ENCODE measurements at regions of chr1 and their contacts with region 1.

Region 1: DNA sequence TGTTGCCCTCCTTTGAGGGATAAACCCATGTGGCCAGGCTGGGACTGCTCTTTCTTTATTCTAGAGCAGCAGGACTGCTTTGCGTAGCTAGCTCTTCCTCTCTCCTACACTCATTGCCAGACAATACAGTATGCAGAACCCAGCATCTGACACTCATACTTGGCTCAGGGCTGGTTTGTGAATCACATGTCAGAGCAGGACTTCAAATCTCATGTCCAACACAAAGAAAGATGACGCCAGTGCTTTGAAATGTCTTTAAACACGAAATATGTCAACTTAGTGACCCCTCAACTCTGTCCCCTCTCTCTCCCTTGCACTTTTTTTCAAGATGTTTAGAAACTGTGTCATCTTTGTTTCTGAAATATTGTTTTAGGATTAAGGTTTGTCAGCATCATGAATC is 135.0 kb downstream of the TGFB2 start:
- DNase-seq: no peak
- H3K4me3 ChIP-seq: no peak overlapping the region
- H3K27ac ChIP-seq: peak overlapping the region; percentile 77
- H3K4me1 ChIP-seq: peaks cover 41% of the 10 kb centered on the region
- H3K27me3 ChIP-seq: no peaks in the 10 kb centered on the region
- CTCF ChIP-seq: no peak

Region 2: GRCh38 chr1:218377143-218377660 is 102.9 kb before region 1 on chr1:
- CTCF ChIA-PET with region 1: no interaction called
- POLR2A ChIA-PET with region 1: interaction called, 9 read pairs
- intact Hi-C with region 1: loop called (anchors 1 kb)
- DNase-seq: peak; percentile 87 to 96
- H3K4me3 ChIP-seq: peak overlapping the region; percentile 36
- H3K27ac ChIP-seq: peak overlapping the region; percentile 91
- H3K4me1 ChIP-seq: peaks cover 80% of the 10 kb centered on the region
- H3K27me3 ChIP-seq: no peaks in the 10 kb centered on the region
- CTCF ChIP-seq: no peak

Region 3: DNA sequence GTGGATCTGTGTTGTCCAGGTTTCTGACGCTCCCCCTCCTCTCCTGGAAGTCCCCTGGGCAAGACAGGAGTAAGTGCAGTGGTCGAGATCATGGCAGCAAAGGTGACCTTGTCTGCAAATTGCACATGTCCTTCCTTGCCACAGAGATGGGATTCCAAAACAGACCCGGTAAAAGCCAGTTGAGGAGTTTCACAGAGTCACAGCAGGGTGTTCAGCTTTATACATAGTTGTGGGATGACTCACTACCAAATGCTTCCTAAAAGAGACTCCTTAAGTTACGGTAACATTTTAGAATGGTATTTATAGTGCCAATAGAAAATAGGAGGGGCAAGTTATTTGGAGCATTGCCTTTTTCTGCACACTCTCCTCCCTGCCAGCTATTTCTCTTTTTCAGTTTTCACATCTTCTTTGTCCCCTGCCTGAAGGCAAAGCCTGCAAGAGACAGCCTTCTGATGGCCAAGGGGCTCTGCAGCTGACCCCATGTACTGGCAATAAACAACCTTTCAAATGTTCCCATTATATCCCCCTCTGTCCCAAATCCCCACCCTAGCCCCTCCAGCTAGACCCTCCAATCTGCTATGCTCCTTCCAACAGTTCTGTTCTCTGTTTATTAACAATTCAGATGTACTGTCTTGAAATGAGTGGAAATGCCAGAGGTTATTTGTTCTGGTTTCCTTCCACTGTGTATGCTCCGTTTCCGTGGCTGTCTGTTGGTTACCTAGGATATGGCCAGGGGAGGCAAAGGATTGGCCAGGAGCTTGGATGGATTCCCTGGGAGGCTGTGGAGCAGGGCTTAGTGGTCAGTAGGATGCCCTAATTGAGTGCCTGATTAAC is 20.0 kb before region 1 on chr1:
- CTCF ChIA-PET with region 1: no interaction called
- POLR2A ChIA-PET with region 1: interaction called, 3 read pairs
- intact Hi-C with region 1: loop called (anchors 1 kb)
- DNase-seq: peak; percentile 68 to 93
- H3K4me3 ChIP-seq: no peak overlapping the region
- H3K27ac ChIP-seq: peak overlapping the region; percentile 63
- H3K4me1 ChIP-seq: peaks cover 14% of the 10 kb centered on the region
- H3K27me3 ChIP-seq: no peaks in the 10 kb centered on the region
- CTCF ChIP-seq: no peak

Region 4: DNA sequence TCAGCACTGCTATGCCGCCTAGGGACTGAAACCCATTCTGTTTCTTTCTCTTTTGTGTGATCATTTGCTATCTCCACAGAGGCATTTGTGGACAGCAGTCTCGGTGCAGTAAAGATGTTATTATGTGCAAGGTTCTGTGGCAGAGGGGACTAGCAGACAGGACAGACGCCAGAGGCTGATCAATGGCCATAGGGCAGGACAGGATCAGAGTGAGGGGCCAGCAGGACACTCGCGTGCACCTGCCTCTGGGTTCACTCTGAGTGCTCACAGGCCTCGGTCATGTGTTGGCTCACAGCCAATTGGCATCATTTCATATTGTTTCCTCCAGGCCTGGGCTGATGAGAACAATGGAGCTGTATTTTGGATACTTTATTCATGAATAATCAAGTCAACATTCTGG is 77.6 kb after region 1 on chr1:
- CTCF ChIA-PET with region 1: no interaction called
- POLR2A ChIA-PET with region 1: no interaction called
- intact Hi-C with region 1: no loop called
- DNase-seq: peak in 1 of 2 experiments; percentile 13
- H3K4me3 ChIP-seq: no peak overlapping the region
- H3K27ac ChIP-seq: no peak overlapping the region
- H3K4me1 ChIP-seq: no peaks in the 10 kb centered on the region
- H3K27me3 ChIP-seq: no peaks in the 10 kb centered on the region
- CTCF ChIP-seq: no peak

Region 5: GRCh38 chr1:219042769-219043168 is 562.6 kb after region 1 on chr1:
- CTCF ChIA-PET with region 1: no interaction called
- POLR2A ChIA-PET with region 1: interaction called, 13 read pairs
- intact Hi-C with region 1: no loop called
- DNase-seq: no peak
- H3K4me3 ChIP-seq: no peak overlapping the region
- H3K27ac ChIP-seq: no peak overlapping the region
- H3K4me1 ChIP-seq: no peaks in the 10 kb centered on the region
- H3K27me3 ChIP-seq: no peaks in the 10 kb centered on the region
- CTCF ChIP-seq: no peak